Naive thymus-derived CD4-positive, alpha-beta T cell (primary cell): ENCODE measurements at regions of chr17 and their contacts with region 1.

Region 1: DNA sequence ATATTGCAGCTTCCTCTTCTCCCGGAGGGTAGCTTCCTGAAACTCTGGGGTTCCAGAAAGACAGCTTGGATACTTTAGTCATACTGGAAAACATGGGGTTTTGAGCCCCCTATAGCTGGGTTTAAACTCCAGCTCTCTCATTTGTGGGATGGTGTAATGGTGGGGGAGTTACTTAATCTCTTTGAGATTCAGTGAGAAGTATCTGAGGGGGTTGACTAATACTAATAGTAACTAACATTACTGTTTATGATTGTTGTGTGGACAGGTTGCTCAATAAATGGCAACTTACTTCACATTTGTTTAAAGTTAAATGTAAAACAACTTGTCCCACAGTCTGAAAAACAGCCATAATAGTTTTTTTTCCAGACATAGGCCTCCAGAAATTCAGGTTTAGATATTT is 5.1 kb upstream of the SUZ12 start:
- DNase-seq: no peak
- ATAC-seq: no peak
- H3K4me3 ChIP-seq: no peak overlapping the region
- H3K4me3 Mint-ChIP-seq: no peak overlapping the region
- H3K27ac ChIP-seq: no peak overlapping the region
- H3K27ac Mint-ChIP-seq: no peak overlapping the region
- H3K4me1 ChIP-seq: peaks cover 0 to 5% of the 10 kb centered on the region in 2 donors
- H3K4me1 Mint-ChIP-seq: peaks cover 0 to 8% (median 3%) of the 10 kb centered on the region in 7 donors
- H3K27me3 ChIP-seq: no peaks in the 10 kb centered on the region
- H3K27me3 Mint-ChIP-seq: no peaks in the 10 kb centered on the region

Region 2: DNA sequence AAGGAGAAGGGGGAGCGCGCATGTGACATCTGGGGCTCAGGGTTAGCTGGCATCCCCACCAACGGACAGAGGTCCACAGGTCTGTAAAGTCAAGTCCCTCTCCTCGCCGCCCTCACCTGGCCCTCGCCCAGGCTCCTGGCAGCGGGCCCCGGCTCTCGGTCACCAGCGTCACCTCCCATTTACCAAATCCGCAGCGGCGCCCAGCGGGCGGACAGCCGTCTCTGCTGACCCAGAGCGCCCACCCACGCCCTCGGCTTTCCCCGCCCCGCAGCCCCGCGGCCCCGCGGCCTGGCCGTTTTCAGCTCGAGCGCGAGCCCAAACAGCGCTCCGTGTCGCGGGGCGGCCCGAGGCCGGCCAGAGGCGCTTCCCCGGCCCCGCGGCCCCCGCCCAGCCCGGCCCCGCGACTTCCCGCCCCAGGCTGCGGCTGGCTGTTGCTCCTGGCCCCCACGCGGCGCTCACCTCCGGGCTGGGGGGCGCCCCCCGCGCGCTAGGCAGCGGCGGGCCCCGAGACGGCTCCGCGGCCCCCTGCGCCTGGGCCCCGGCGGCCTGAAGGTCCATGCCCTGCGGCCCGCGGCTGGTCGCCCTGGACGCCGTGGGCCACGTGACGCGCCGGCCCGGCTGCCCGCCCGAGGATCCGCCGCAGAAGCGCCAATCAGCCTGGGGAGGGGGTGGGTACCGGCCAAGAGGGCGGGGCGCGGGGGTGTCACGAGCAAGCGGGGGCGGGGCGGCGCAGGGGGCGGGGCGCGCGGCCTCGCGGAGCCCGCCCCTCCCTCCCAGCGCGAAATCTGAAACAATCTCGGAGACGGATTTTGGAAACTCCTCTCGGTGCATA is 72.9 kb before region 1 on chr17 and contains the start of gene COPRS:
- CTCF ChIA-PET with region 1: no interaction called
- POLR2A ChIA-PET with region 1: no interaction called
- intact Hi-C with region 1: loop called (anchors 2 kb)
- DNase-seq: peak; percentile 46 to 83 (median 74)
- ATAC-seq: peak; percentile 97
- H3K4me3 ChIP-seq: peak within 1 kb of the TSS; percentile 60
- H3K4me3 Mint-ChIP-seq: peak within 1 kb of the TSS; percentile 79 to 93 (median 86)
- H3K27ac ChIP-seq: peak within 1 kb of the TSS; percentile 51
- H3K27ac Mint-ChIP-seq: peak within 1 kb of the TSS; percentile 3 to 87 (median 75)
- H3K4me1 ChIP-seq: peaks cover 0 to 7% of the 10 kb centered on the region in 2 donors
- H3K4me1 Mint-ChIP-seq: peaks cover 11 to 19% (median 15%) of the 10 kb centered on the region in 7 donors
- H3K27me3 ChIP-seq: no peaks in the 10 kb centered on the region
- H3K27me3 Mint-ChIP-seq: no peaks in the 10 kb centered on the region
- total RNA-seq, gene COPRS: 2.2 to 20.9 (median 4.2) TPM

Region 3: GRCh38 chr17:32127158-32127897 is 195.6 kb after region 1 on chr17:
- CTCF ChIA-PET with region 1: no interaction called
- POLR2A ChIA-PET with region 1: no interaction called
- intact Hi-C with region 1: no loop called
- DNase-seq: peak; percentile 63 to 85 (median 82)
- ATAC-seq: peak; percentile 100
- H3K4me3 ChIP-seq: peak overlapping the region; percentile 81
- H3K4me3 Mint-ChIP-seq: peak overlapping the region; percentile 94 to 99 (median 96)
- H3K27ac ChIP-seq: peak overlapping the region; percentile 89
- H3K27ac Mint-ChIP-seq: peak overlapping the region; percentile 96 to 100 (median 97)
- H3K4me1 ChIP-seq: peaks cover 6 to 7% of the 10 kb centered on the region in 2 donors
- H3K4me1 Mint-ChIP-seq: peaks cover 7 to 38% (median 26%) of the 10 kb centered on the region in 7 donors
- H3K27me3 ChIP-seq: no peaks in the 10 kb centered on the region
- H3K27me3 Mint-ChIP-seq: no peaks in the 10 kb centered on the region